ENCODE measurements at regions of chr4 and their contacts with region 1.

Region 1: DNA sequence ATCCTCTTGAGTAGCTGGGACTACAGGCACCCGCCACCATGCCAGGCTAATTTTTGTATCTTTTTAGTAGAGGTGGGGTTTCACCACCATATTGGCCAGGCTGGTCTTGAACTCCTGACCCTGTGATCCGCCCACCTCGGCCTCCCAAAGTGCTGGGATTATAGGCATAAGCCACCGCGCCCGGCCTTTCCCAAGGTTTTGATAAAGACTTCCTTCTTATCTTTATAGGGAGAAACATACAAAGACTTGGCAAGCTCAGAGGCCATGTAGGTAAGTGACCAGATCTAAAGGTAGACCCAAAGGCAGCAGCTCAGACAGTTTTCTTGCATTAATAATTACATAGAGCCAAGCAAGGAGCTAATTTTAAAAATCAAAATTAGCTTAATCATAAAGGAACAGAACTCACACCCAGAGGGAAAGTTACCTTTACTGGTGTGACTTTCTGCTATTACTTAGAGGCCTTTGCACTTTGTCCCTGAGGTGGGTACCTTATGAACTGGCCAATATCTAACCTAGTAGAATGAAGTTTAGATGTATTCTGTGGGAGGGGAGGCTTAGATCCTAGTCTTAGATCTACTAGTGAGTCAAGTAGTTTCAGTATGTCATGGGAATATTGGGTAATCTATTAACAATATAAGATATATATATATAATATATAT is 67.3 kb downstream of the HPGD start:
- DNase-seq: no peak
- ATAC-seq: no peak
- H3K4me3 ChIP-seq: no peak overlapping the region
- H3K4me3 Mint-ChIP-seq: no peak overlapping the region
- H3K27ac ChIP-seq: no peak overlapping the region
- H3K27ac Mint-ChIP-seq: no peak overlapping the region
- H3K4me1 ChIP-seq: no peaks in the 10 kb centered on the region
- H3K4me1 Mint-ChIP-seq: no peaks in the 10 kb centered on the region
- H3K27me3 ChIP-seq: no peaks in the 10 kb centered on the region
- H3K27me3 Mint-ChIP-seq: peaks cover 3 to 8% of the 10 kb centered on the region in 2 donors
- CTCF ChIP-seq: no peak

Region 2: DNA sequence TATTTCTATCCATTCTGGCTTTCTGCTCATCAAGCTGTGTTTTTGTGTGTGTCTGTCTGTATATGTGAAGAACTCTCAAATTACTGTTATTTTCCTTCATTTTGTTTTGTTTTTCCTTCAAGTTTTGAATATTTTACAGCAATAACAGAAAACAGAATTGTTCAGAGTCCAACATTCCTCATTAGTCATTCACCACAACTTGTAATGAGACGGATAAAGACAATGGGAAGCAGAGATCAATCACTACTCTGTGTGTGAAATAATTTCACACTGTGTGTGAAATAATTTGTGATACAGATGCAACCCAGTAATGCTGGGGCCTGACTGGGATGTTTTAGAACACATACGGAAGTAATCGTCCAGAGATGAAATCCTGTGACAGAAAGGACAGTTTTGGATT is 12.2 kb after region 1 on chr4:
- intact Hi-C with region 1: no loop called
- DNase-seq: no peak
- ATAC-seq: no peak
- H3K4me3 ChIP-seq: no peak overlapping the region
- H3K4me3 Mint-ChIP-seq: no peak overlapping the region
- H3K27ac ChIP-seq: no peak overlapping the region
- H3K27ac Mint-ChIP-seq: no peak overlapping the region
- H3K4me1 ChIP-seq: no peaks in the 10 kb centered on the region
- H3K4me1 Mint-ChIP-seq: no peaks in the 10 kb centered on the region
- H3K27me3 ChIP-seq: no peaks in the 10 kb centered on the region
- H3K27me3 Mint-ChIP-seq: peaks cover 0 to 12% of the 10 kb centered on the region in 2 donors
- CTCF ChIP-seq: no peak

Region 3: GRCh38 chr4:174490451-174490870 is 35.5 kb after region 1 on chr4:
- intact Hi-C with region 1: no loop called
- DNase-seq: no peak
- ATAC-seq: no peak
- H3K4me3 ChIP-seq: no peak overlapping the region
- H3K4me3 Mint-ChIP-seq: no peak overlapping the region
- H3K27ac ChIP-seq: no peak overlapping the region
- H3K27ac Mint-ChIP-seq: no peak overlapping the region
- H3K4me1 ChIP-seq: no peaks in the 10 kb centered on the region
- H3K4me1 Mint-ChIP-seq: no peaks in the 10 kb centered on the region
- H3K27me3 ChIP-seq: no peaks in the 10 kb centered on the region
- H3K27me3 Mint-ChIP-seq: no peaks in the 10 kb centered on the region
- CTCF ChIP-seq: no peak

Region 4: DNA sequence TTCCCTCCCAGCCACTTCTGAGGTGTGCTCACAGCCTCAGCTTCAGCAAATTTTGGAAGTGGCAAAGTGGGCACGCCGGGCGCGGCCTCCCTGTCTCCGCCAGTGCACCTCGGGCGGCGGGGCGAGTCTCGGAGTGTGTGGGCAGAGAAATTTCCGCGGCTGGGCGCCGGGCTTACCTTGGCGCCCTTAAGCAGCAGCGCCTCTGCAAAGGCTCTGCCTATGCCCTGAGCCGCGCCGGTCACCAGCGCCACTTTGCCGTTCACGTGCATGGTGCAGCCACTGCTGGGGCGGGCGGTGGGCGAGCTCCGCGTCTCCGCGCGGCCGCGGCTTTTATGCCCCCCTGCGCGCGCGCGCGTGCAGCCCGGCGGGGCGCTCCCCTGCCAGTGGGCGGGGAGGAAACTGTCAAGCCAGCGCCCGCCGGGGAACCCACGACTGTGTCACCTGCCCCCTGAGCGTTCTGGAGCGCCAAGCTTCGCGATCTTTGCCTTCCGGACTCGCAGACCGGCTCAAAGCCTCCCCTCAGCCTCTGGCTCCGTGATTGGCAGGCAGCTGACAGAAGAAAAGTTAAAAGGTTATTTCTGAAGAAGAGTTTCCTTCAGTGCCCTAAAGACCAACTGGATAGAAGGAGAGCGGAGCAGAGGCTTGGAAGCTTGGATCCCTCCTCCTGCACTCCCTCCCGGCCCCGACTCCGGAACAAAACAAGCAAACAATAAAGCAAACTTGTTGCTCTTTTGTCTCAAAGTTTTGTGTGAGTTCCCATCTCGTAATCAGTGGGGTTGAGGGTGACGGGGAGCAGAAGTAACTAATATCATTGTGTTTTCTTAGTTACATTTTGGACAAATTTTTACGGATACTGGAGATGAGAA is 67.5 kb after region 1 on chr4 and contains the start of gene HPGD:
- intact Hi-C with region 1: loop called (anchors 2 kb)
- DNase-seq: peak; percentile 70 to 81
- ATAC-seq: peak; percentile 91 to 94 (median 93)
- H3K4me3 ChIP-seq: peak within 1 kb of the TSS; percentile 42
- H3K4me3 Mint-ChIP-seq: peak within 1 kb of the TSS; percentile 95
- H3K27ac ChIP-seq: peak within 1 kb of the TSS; percentile 68
- H3K27ac Mint-ChIP-seq: peak within 1 kb of the TSS; percentile 79 to 90
- H3K4me1 ChIP-seq: peaks cover 16% of the 10 kb centered on the region
- H3K4me1 Mint-ChIP-seq: peaks cover 12 to 34% of the 10 kb centered on the region in 2 donors
- H3K27me3 ChIP-seq: no peaks in the 10 kb centered on the region
- H3K27me3 Mint-ChIP-seq: peaks cover 10 to 12% of the 10 kb centered on the region in 2 donors
- CTCF ChIP-seq: no peak
- total RNA-seq, gene HPGD: 2.2 to 26.7 (median 12.0) TPM

Measured in natural killer cell (primary cell).